AG04449 (cell line): ENCODE measurements at regions of chr19 and their contacts with region 1.

Region 1: DNA sequence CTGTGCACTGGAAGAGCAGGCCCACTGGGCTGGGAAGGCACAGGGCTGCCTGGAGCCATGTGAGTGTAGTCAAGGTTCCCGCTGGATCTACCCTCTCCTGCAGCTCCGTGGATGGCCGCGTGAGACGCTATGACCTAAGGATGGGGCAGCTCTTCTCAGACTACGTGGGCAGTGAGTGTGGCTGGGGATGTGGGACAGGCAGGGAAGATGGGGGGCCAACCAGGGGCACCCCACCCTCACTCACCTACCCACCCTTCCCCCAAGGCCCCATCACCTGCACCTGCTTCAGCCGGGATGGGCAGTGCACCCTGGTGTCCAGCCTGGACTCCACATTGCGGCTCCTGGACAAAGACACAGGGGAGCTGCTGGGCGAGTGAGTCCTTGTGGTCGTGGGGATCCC is 6.1 kb downstream of the WDR83 start:
- DNase-seq: no peak
- H3K4me3 ChIP-seq: no peak overlapping the region
- CTCF ChIP-seq: no peak

Region 2: DNA sequence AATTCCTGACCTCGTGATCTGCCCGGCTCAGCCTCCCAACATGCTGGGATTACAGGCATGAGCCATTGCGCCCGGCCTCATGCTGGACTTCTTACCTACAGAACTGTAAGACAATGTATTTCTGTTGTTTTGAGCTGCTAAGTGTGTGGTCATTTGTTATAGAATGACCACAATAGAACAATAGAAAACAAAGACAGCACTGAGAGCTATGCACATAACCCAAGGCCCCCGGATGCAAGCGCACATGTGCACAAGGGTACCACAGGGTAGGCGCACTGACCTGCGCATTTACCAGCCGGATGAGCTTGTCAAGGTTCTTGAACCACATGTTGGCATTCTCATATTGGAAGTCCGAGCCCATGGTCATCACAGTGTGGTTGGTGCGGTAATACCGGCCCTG is 11.8 kb before region 1 on chr19:
- CTCF ChIA-PET with region 1: interaction called, 20 read pairs
- POLR2A ChIA-PET with region 1: no interaction called
- DNase-seq: no peak
- H3K4me3 ChIP-seq: no peak overlapping the region
- CTCF ChIP-seq: no peak

Region 3: GRCh38 chr19:12815088-12815487 is 142.3 kb after region 1 on chr19:
- CTCF ChIA-PET with region 1: no interaction called
- POLR2A ChIA-PET with region 1: no interaction called
- DNase-seq: no peak
- H3K4me3 ChIP-seq: no peak overlapping the region
- CTCF ChIP-seq: no peak